ENCODE measurements at regions of chr2 and their contacts with region 1.

Region 1: DNA sequence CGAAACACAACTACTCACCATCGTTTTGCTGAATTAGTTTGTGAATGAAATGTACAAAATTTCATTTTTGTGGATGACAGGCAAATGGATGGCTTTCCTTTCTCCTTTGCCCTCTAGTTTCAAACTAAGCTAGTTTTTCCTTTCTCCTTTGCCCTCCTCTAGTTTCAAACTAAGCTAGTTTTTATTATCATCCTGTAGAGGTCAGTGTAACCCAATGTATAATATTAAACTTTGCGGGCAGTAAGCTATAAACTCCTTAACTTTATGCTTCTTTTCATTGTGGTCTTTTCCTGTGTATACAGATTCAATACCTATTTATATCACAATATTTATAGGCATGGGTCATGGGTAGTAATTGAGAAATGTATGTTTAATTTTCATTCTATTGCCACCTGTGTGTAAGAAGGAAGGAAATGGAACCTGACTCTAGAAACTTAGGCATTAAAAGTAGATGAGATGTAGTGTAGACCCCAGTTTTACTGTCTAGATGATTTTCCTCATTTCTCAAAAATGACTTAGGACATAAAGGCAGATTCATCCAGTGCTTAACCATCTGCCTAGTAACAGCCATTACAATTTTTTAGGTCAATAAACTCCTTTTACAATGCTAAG is 58.1 kb downstream of the MAP3K19 start:
- DNase-seq: peak; percentile 39 to 68 (median 63)
- H3K4me3 ChIP-seq: no peak overlapping the region
- H3K27ac ChIP-seq: no peak overlapping the region
- H3K4me1 ChIP-seq: no peaks in the 10 kb centered on the region
- H3K27me3 ChIP-seq: no peaks in the 10 kb centered on the region

Region 2: DNA sequence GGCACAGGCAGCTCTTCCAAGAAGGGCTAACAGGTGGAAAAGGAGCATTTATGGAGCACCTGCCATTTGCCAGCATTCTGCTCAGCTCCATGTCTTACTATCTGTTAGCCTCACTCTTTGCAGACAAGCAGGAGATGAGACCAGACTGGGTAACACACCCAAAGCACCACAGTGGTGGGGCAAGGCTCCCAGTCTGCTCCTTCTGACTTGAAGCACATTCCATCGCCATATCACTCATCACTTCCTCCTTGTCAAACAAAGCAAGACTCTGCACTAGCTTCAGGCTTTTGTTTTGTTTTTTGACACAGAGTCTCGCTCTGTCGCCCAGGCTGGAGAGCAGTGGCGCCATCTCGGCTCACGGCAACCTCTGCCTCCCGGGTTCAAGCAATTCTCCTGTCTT is 552.4 kb before region 1 on chr2:
- CTCF ChIA-PET with region 1: no interaction called
- POLR2A ChIA-PET with region 1: no interaction called
- DNase-seq: no peak
- H3K4me3 ChIP-seq: no peak overlapping the region
- H3K27ac ChIP-seq: no peak overlapping the region
- H3K4me1 ChIP-seq: peaks cover 0 to 5% (median 0%) of the 10 kb centered on the region in 4 experiments
- H3K27me3 ChIP-seq: no peaks in the 10 kb centered on the region

Region 3: DNA sequence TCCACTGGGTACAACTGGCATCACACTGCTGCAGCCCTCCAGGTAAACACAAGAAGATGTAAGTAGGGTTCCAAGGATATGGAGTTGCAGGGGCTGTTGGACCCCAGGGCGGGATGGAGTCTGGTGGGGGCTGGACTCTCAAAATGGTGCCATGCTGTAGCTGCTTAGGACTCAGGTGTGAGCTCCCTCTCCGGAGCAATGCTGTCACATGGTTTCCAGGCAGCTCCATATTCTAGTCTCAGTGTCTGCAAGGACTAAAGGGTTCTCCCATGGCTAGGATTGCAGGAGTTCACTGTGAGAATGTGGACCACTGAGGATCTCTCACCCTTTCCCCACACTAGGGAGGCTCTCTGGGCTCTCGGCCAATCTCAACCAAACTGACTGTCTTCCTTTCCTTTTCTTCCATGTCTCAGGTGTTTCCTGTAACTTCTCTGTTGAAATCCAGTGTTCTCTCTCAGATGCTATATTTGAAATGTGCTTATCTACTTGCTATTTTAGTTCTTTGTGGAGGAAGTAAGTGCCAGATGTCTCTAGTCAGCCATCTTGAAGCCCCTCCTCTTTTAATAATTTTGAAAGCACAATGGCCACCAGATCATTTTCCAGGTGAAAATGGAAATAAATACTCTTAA is 12.9 kb before region 1 on chr2:
- CTCF ChIA-PET with region 1: interaction called, 21 read pairs
- POLR2A ChIA-PET with region 1: interaction called, 3 read pairs
- DNase-seq: peak; percentile 72 to 98 (median 95)
- H3K4me3 ChIP-seq: no peak overlapping the region
- H3K27ac ChIP-seq: no peak overlapping the region
- H3K4me1 ChIP-seq: peaks cover 0 to 17% (median 16%) of the 10 kb centered on the region in 4 experiments
- H3K27me3 ChIP-seq: no peaks in the 10 kb centered on the region

Region 4: GRCh38 chr2:135004005-135004746 is 15.1 kb after region 1 on chr2:
- CTCF ChIA-PET with region 1: interaction called, 56 read pairs
- POLR2A ChIA-PET with region 1: interaction called, 5 read pairs
- DNase-seq: peak; percentile 62 to 74 (median 62)
- H3K4me3 ChIP-seq: no peak overlapping the region
- H3K27ac ChIP-seq: no peak overlapping the region
- H3K4me1 ChIP-seq: peaks cover 0 to 3% (median 0%) of the 10 kb centered on the region in 4 experiments
- H3K27me3 ChIP-seq: peaks cover 0 to 13% (median 6%) of the 10 kb centered on the region in 5 experiments

Region 5: GRCh38 chr2:135265960-135266490 is 276.9 kb after region 1 on chr2:
- CTCF ChIA-PET with region 1: no interaction called
- POLR2A ChIA-PET with region 1: no interaction called
- DNase-seq: no peak
- H3K4me3 ChIP-seq: no peak overlapping the region
- H3K27ac ChIP-seq: no peak overlapping the region
- H3K4me1 ChIP-seq: no peaks in the 10 kb centered on the region
- H3K27me3 ChIP-seq: no peaks in the 10 kb centered on the region

Region 6: GRCh38 chr2:135709992-135710391 is 720.9 kb after region 1 on chr2:
- CTCF ChIA-PET with region 1: interaction called, 19 read pairs
- POLR2A ChIA-PET with region 1: no interaction called
- DNase-seq: peak; percentile 34 to 78 (median 67)
- H3K4me3 ChIP-seq: no peak overlapping the region
- H3K27ac ChIP-seq: no peak overlapping the region
- H3K4me1 ChIP-seq: no peaks in the 10 kb centered on the region
- H3K27me3 ChIP-seq: no peaks in the 10 kb centered on the region

Measured in common myeloid progenitor, CD34-positive (primary cell).